ENCODE measurements at regions of chr1 and their contacts with region 1.

Region 1: GRCh38 chr1:56189946-56190792 is 389.2 kb downstream of the PLPP3 start:
- DNase-seq: peak; percentile 39
- ATAC-seq: peak; percentile 83
- H3K4me3 Mint-ChIP-seq: no peak overlapping the region
- H3K27ac Mint-ChIP-seq: no peak overlapping the region
- H3K4me1 Mint-ChIP-seq: peaks cover 40% of the 10 kb centered on the region
- H3K27me3 Mint-ChIP-seq: no peaks in the 10 kb centered on the region
- CTCF ChIP-seq: peak; percentile 29; the same call in 1 of the 2 replicates

Region 2: GRCh38 chr1:56064705-56065104 is 125.5 kb before region 1 on chr1:
- CTCF ChIA-PET with region 1: no interaction called
- POLR2A ChIA-PET with region 1: no interaction called
- DNase-seq: no peak
- ATAC-seq: no peak
- H3K4me3 Mint-ChIP-seq: no peak overlapping the region
- H3K27ac Mint-ChIP-seq: no peak overlapping the region
- H3K4me1 Mint-ChIP-seq: peaks cover 4% of the 10 kb centered on the region
- H3K27me3 Mint-ChIP-seq: no peaks in the 10 kb centered on the region
- CTCF ChIP-seq: no peak

Region 3: GRCh38 chr1:56123421-56123820 is 66.7 kb before region 1 on chr1:
- CTCF ChIA-PET with region 1: no interaction called
- POLR2A ChIA-PET with region 1: no interaction called
- DNase-seq: no peak
- ATAC-seq: no peak
- H3K4me3 Mint-ChIP-seq: no peak overlapping the region
- H3K27ac Mint-ChIP-seq: no peak overlapping the region
- H3K4me1 Mint-ChIP-seq: no peaks in the 10 kb centered on the region
- H3K27me3 Mint-ChIP-seq: no peaks in the 10 kb centered on the region; the same call in 1 of the 2 replicates
- CTCF ChIP-seq: no peak

Region 4: GRCh38 chr1:56200442-56200841 is 10.3 kb after region 1 on chr1:
- CTCF ChIA-PET with region 1: interaction called, 12 read pairs
- POLR2A ChIA-PET with region 1: no interaction called
- DNase-seq: no peak
- ATAC-seq: no peak
- H3K4me3 Mint-ChIP-seq: no peak overlapping the region
- H3K27ac Mint-ChIP-seq: no peak overlapping the region
- H3K4me1 Mint-ChIP-seq: peaks cover 21% of the 10 kb centered on the region
- H3K27me3 Mint-ChIP-seq: no peaks in the 10 kb centered on the region
- CTCF ChIP-seq: no peak